Right ventricle myocardium inferior (tissue), 1 donor: ENCODE measurements at regions of chr11 and their contacts with region 1.

Region 1: GRCh38 chr11:64317957-64318693 is at the start of gene PRDX5:
- DNase-seq: peak; percentile 98
- ATAC-seq: peak; percentile 93
- total RNA-seq, gene PRDX5: 410 TPM

Region 2: GRCh38 chr11:64355078-64355940 is 37.2 kb after region 1 on chr11:
- intact Hi-C with region 1: loop called (anchors 1 kb)
- DNase-seq: peak; percentile 89
- ATAC-seq: peak; percentile 54